ENCODE measurements at regions of chr17 and their contacts with region 1.

Region 1: DNA sequence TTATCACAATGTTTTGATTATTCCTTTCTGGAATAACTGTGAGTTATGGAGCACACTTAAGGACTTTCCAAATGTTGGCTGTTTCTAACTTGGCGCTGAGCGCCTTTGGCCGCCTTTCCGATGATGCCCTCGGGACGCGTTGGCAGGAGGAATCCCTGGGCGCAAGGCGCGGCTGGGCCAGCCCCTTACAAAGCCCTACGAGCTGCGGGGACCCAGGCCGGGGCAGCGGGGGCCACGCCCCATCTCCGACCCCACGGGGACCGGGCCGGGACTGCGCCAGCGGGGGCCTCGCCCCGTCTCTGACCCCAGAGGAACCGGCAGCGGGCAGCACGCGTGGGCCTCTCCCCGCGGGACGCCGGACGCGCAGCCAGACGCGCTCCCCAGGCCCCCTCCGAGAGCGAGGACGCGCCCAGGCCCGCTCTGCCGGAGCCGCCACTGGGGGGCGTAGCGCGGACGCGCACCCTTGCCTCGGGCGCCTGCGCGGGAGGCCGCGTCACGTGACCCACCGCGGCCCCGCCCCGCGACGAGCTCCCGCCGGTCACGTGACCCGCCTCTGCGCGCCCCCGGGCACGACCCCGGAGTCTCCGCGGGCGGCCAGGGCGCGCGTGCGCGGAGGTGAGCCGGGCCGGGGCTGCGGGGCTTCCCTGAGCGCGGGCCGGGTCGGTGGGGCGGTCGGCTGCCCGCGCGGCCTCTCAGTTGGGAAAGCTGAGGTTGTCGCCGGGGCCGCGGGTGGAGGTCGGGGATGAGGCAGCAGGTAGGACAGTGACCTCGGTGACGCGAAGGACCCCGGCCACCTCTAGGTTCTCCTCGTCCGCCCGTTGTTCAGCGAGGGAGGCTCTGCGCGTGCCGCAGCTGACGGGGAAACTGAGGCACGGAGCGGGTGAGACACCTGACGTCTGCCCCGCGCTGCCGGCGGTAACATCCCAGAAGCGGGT is at the start of gene GAA:
- DNase-seq: peak; percentile 96
- ATAC-seq: peak; percentile 90
- H3K4me3 Mint-ChIP-seq: peak within 1 kb of the TSS; percentile 86
- H3K27ac Mint-ChIP-seq: peak within 1 kb of the TSS; percentile 83
- H3K4me1 Mint-ChIP-seq: peaks cover 23% of the 10 kb centered on the region
- H3K27me3 Mint-ChIP-seq: peaks cover 3% of the 10 kb centered on the region
- CTCF ChIP-seq: peak; percentile 63
- total RNA-seq, gene GAA: 19.6 and 20.2 TPM in 2 replicates

Region 2: DNA sequence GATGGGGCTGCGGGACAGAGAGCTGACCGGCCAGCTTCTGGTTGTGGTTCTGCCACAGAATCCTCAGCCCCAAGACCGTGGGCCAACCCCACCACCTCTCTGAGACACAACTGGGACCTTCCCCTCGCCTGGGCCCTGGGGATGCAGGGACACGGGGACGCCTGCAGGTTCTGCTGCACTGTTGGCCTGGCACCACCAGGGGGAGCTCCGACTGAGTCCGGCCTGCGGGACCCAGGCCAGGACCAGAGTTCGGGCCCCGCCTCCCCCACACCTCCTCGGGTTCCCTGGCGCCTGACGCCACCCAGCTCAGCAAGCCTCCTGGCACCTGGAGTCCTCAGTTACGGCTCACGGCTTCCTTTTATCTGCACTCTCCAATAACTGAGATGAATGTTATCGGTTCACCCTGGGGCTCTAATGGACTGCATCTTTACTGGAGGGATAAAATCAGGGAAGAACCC is 92.9 kb before region 1 on chr17:
- CTCF ChIA-PET with region 1: interaction called, 3 read pairs
- POLR2A ChIA-PET with region 1: interaction called, 3 read pairs
- intact Hi-C with region 1: loop called (anchors 5 kb)
- DNase-seq: peak; percentile 77
- ATAC-seq: peak; percentile 94
- H3K4me3 Mint-ChIP-seq: no peak overlapping the region
- H3K27ac Mint-ChIP-seq: no peak overlapping the region
- H3K4me1 Mint-ChIP-seq: peaks cover 5% of the 10 kb centered on the region
- H3K27me3 Mint-ChIP-seq: no peaks in the 10 kb centered on the region
- CTCF ChIP-seq: peak; percentile 60

Region 3: GRCh38 chr17:80035943-80036714 is 65.1 kb before region 1 on chr17 and contains the start of gene CCDC40:
- CTCF ChIA-PET with region 1: interaction called, 3 read pairs
- POLR2A ChIA-PET with region 1: no interaction called
- intact Hi-C with region 1: loop called (anchors 1 kb)
- DNase-seq: peak; percentile 80
- ATAC-seq: peak; percentile 83
- H3K4me3 Mint-ChIP-seq: peak within 1 kb of the TSS; percentile 89
- H3K27ac Mint-ChIP-seq: peak within 1 kb of the TSS; percentile 86
- H3K4me1 Mint-ChIP-seq: peaks cover 15% of the 10 kb centered on the region
- H3K27me3 Mint-ChIP-seq: peaks cover 3% of the 10 kb centered on the region
- CTCF ChIP-seq: no peak
- total RNA-seq, gene CCDC40: 0.46 and 0.55 TPM in 2 replicates

Region 4: DNA sequence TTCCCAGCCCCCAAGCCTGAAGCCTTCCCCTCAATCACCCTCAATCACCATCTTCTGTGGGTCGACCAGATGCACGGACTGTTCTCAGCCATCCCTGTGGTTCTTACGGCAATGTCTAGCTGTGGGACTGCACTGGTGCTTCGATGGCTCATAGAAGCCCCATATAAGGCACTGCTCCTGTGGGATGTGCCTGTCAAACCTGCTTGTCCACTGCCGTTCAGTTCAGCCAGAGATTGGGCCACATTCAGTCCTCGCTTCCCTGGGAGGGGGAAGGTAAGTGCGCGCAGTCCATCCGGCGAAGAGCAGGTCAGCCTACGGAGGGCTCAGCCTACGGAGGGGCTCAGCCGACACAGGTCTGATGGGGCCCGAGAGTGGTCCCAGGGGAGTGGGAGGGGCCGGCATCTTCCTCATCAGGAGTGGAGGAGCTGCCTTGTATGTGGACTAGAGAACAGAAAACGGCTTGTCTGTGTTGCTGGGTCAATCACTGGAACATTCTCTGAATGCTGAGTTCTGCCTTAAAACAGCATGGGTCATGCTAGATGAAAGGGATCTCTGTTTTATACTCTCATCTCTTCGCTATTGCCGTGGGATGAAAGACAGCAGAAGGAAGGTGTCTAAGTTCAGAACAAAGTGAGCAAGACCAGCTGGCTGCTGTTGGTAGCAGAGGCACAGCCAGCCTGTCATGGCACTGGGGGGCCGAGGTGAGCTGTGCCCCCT is 68.7 kb after region 1 on chr17 and contains the start of gene CARD14:
- CTCF ChIA-PET with region 1: no interaction called
- POLR2A ChIA-PET with region 1: no interaction called
- intact Hi-C with region 1: no loop called
- DNase-seq: no peak
- ATAC-seq: no peak
- H3K4me3 Mint-ChIP-seq: no peak within 1 kb of the TSS
- H3K27ac Mint-ChIP-seq: no peak within 1 kb of the TSS
- H3K4me1 Mint-ChIP-seq: no peaks in the 10 kb centered on the region
- H3K27me3 Mint-ChIP-seq: peaks cover 2% of the 10 kb centered on the region
- CTCF ChIP-seq: no peak
- total RNA-seq, gene CARD14: not detected in 2 replicates

Region 5: GRCh38 chr17:80263253-80264204 is 162.3 kb after region 1 on chr17:
- CTCF ChIA-PET with region 1: interaction called, 3 read pairs
- POLR2A ChIA-PET with region 1: no interaction called
- intact Hi-C with region 1: loop called (anchors 5 kb)
- DNase-seq: peak; percentile 73
- ATAC-seq: peak; percentile 64
- H3K4me3 Mint-ChIP-seq: peak overlapping the region; percentile 93
- H3K27ac Mint-ChIP-seq: peak overlapping the region; percentile 90
- H3K4me1 Mint-ChIP-seq: peaks cover 64% of the 10 kb centered on the region
- H3K27me3 Mint-ChIP-seq: no peaks in the 10 kb centered on the region
- CTCF ChIP-seq: no peak

Region 6: DNA sequence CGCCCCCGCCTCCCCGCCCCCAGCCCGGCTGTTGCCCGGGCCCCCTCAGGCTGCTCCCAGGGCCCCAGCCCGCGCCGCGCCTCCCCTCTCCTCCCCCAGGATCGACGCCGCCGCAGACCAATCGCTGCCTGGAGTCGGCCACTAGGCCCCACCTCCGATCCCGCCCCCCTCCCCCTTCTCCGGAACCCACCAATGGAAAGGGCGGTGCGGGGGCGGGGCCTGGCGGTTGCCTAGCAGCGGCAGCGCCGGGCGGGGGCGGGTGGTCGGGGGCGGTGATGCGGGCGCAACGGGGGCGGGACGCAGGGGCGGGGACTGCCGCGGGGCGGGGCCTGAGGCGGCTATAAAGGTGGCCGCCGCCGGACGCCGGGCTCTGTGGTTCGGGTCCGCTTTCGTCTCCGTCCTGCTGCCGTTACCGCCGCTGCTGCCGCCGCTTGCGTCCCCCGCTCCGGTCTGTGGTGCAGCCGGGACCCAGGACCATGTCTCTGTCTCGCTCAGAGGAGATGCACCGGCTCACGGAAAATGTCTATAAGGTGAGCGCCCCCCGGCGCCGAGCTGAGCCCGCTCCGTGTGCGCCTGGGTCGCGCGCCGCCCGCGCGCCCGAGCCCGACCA is 933.6 kb after region 1 on chr17 and contains the start of gene BAIAP2:
- CTCF ChIA-PET with region 1: no interaction called
- POLR2A ChIA-PET with region 1: no interaction called
- intact Hi-C with region 1: loop called (anchors 2 kb)
- DNase-seq: peak; percentile 91
- ATAC-seq: peak; percentile 88
- H3K4me3 Mint-ChIP-seq: peak within 1 kb of the TSS; percentile 88
- H3K27ac Mint-ChIP-seq: peak within 1 kb of the TSS; percentile 69
- H3K4me1 Mint-ChIP-seq: peaks cover 12% of the 10 kb centered on the region
- H3K27me3 Mint-ChIP-seq: peaks cover 40% of the 10 kb centered on the region
- CTCF ChIP-seq: no peak
- total RNA-seq, gene BAIAP2: 5.3 and 6.8 TPM in 2 replicates

Measured in activated B cell treated with CpG ODN at 0.5 μM for 24 hours (primary cell).